ENCODE measurements at regions of chr5 and their contacts with region 1.

Region 1: DNA sequence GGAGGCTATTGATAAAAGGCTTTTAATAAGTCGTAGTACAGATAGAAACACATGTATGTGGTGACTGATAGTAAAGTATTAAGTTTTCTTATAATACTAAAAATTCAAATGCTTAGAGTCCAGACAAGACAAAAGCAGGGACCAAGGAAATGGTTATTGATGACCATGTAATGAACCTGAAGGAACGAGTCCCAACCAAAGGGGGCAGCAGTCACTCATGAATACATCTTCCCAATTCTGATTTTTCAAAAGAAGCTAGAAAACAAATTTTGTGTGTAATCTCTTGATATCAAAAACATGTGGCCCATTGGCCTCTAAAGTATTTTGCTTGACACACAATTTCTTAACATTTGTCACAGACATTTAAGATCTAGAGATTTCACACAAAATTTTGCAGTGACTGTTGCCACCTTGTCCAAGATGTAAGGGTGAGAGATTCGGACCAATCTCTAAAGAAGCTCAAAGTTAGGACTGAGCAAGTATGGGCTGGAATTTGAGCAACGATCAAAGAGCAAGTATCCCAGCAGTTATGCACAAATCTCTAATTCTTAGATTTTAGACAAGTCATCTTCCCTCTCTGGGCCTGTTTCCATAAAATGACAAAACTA is 66.8 kb downstream of the ARL15 start:
- DNase-seq: no peak
- H3K4me3 ChIP-seq: no peak overlapping the region
- CTCF ChIP-seq: no peak
- POLR2A ChIP-seq: no peak

Region 2: GRCh38 chr5:54421976-54422375 is 178.4 kb after region 1 on chr5:
- intact Hi-C with region 1: loop called (anchors 10 kb)
- DNase-seq: no peak
- H3K4me3 ChIP-seq: no peak overlapping the region
- CTCF ChIP-seq: no peak
- POLR2A ChIP-seq: no peak

Measured in lower leg skin (tissue), 4 donors.